ENCODE measurements at regions of chr4 and their contacts with region 1.

Region 1: GRCh38 chr4:44448548-44449461 is at the start of gene KCTD8:
- DNase-seq: peak; percentile 87
- ATAC-seq: peak; percentile 84
- H3K4me3 ChIP-seq: peak within 1 kb of the TSS; percentile 83
- H3K27ac ChIP-seq: peak within 1 kb of the TSS; percentile 26; the same call in 1 of the 2 replicates
- H3K4me1 ChIP-seq: no peaks in the 10 kb centered on the region
- H3K27me3 ChIP-seq: no peaks in the 10 kb centered on the region
- CTCF ChIP-seq: peak; percentile 70
- total RNA-seq, gene KCTD8: 0.35 TPM in 1 of 2 replicates, not detected in the other

Region 2: GRCh38 chr4:44434247-44434646 is 14.6 kb before region 1 on chr4:
- CTCF ChIA-PET with region 1: no interaction called
- POLR2A ChIA-PET with region 1: interaction called, 5 read pairs
- intact Hi-C with region 1: loop called (anchors 1 kb)
- DNase-seq: peak; percentile 62
- ATAC-seq: peak; percentile 97
- H3K4me3 ChIP-seq: no peak overlapping the region
- H3K27ac ChIP-seq: peak overlapping the region; percentile 60
- H3K4me1 ChIP-seq: peaks cover 14% of the 10 kb centered on the region; the same call in 1 of the 2 replicates
- H3K27me3 ChIP-seq: no peaks in the 10 kb centered on the region
- CTCF ChIP-seq: no peak

Region 3: DNA sequence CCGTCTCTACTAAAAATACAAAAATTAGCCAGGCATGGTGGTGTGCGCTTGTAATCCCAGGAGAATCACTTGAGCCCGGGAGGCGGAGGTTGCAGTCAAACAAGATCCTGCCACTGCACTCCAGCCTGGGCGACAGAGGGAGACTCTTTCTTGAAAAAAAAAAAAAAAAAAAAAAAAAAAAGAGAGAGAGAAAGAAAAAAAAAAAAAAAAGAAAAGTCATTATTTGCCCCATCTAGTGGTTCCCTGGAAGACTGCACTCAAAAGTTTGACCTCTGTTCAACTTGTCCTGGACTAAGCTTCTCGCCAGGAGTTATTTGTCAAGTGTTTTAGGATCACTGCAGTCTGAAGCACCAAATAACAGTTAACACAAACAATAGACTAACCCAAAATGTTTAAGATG is 45.1 kb after region 1 on chr4:
- CTCF ChIA-PET with region 1: interaction called, 12 read pairs
- POLR2A ChIA-PET with region 1: no interaction called
- intact Hi-C with region 1: loop called (anchors 2 kb)
- DNase-seq: peak; percentile 49
- ATAC-seq: no peak
- H3K4me3 ChIP-seq: no peak overlapping the region
- H3K27ac ChIP-seq: no peak overlapping the region
- H3K4me1 ChIP-seq: no peaks in the 10 kb centered on the region
- H3K27me3 ChIP-seq: no peaks in the 10 kb centered on the region
- CTCF ChIP-seq: peak; percentile 49; the same call in 1 of the 2 replicates

Region 4: GRCh38 chr4:44522761-44523445 is 74.1 kb after region 1 on chr4:
- CTCF ChIA-PET with region 1: no interaction called
- POLR2A ChIA-PET with region 1: no interaction called
- intact Hi-C with region 1: loop called (anchors 1 kb)
- DNase-seq: peak; percentile 52
- ATAC-seq: peak; percentile 94
- H3K4me3 ChIP-seq: no peak overlapping the region
- H3K27ac ChIP-seq: no peak overlapping the region
- H3K4me1 ChIP-seq: peaks cover 12% of the 10 kb centered on the region
- H3K27me3 ChIP-seq: no peaks in the 10 kb centered on the region
- CTCF ChIP-seq: no peak

Region 5: DNA sequence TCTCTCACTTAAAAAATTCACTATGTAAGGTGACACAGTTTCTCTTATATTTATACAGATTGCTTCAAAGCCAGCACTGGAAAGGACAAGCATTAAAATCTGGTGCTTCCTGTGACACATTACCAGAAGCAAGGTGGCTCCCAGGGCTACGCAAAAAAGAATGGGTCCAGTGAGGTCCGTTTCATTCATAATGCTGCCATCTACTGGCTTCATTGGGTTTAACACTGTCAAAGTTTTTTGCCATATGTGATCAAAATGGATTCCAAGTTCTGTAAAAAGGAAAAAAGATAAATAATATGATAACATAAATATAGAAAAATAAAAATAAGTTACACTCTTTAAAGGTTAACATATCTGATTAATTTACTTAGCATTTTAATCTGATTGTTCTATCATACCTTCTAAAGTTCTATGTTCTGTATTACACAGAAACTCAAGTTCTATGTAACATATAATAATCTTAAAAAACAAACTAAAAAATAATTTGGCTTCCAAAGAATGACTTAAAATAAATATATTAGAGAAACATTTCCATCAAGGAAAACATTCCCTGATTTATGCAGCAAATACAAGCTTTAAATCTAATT is 180.6 kb after region 1 on chr4:
- CTCF ChIA-PET with region 1: interaction called, 6 read pairs
- POLR2A ChIA-PET with region 1: no interaction called
- intact Hi-C with region 1: loop called (anchors 1 kb)
- DNase-seq: peak; percentile 81
- ATAC-seq: peak; percentile 77
- H3K4me3 ChIP-seq: no peak overlapping the region
- H3K27ac ChIP-seq: no peak overlapping the region
- H3K4me1 ChIP-seq: no peaks in the 10 kb centered on the region
- H3K27me3 ChIP-seq: no peaks in the 10 kb centered on the region
- CTCF ChIP-seq: peak; percentile 62